Right ventricle myocardium superior (tissue), 1 donor: ENCODE measurements at regions of chr5 and their contacts with region 1.

Region 1: DNA sequence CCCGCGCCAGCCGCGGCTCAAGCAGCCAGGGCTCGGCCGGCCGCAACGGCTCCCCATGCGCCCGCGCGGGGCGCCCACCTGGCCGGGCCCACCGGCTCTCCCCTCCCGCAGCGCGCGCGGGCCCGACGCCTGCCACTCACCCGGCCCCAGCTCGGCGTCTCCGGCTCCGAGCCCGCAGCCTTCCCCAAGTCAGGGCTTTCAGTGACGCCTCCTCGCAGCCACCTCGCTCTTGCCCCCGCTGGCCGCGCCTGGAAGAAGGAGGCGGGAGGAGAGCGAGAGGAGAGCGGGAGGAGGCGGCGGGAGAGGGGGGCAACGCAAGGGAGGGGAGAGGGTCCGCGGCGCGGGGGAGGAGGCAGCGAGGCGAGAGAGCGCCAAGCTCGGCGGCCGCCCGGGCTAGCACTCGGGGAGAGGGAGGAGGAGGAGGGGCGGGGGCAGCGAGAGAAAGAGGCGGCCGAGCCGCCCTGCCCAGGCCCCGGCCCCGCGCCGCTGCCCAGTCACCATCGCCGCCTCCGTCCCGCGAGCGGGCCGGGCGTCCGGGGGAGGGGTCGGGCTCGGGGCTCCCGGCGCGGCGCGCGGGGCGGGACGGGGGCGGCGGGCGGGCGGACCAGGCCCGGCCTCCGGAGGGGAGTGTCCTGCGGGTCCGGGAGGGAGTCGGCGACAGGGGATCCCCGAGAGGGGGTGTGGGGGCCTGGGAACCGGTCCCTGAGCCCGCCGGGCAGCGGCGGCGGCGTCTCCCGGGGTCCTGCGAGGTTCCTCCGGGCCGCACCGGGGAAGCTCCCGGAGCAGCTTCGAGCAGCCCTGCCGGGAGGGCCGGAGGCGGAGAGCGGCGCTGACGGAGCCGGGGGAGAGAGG is at the start of gene LHFPL2:
- DNase-seq: peak; percentile 87
- ATAC-seq: peak; percentile 92
- total RNA-seq, gene LHFPL2: 5.0 TPM

Region 2: DNA sequence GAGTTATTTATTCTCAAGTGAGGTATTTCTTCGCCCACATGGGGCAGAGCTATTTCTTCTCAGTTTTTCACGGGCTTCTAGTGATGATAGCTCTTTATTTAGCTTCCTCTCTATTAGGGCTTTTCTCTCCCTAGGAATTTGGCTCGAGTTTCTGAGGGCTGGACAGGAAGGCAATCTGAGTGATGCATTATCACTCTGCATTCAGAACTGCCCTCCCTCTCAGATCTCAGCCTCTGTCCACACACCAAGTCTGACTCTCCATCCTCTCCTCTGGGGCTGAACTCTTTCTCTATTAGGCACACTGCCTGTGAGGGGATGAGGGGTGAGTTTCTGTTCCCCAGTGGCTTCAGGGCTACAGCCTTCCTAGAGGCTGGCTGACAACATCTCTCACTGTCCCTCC is 303.1 kb before region 1 on chr5:
- intact Hi-C with region 1: no loop called
- DNase-seq: no peak
- ATAC-seq: peak; percentile 95

Region 3: GRCh38 chr5:78472469-78473106 is 176.0 kb before region 1 on chr5:
- intact Hi-C with region 1: loop called (anchors 10 kb)
- DNase-seq: no peak
- ATAC-seq: peak; percentile 62

Region 4: GRCh38 chr5:78886341-78887230 is 238.0 kb after region 1 on chr5:
- intact Hi-C with region 1: no loop called
- DNase-seq: no peak
- ATAC-seq: no peak

Region 5: GRCh38 chr5:78899922-78900362 is 251.4 kb after region 1 on chr5:
- intact Hi-C with region 1: loop called (anchors 10 kb)
- DNase-seq: no peak
- ATAC-seq: no peak